ENCODE measurements at regions of chr5 and their contacts with region 1.

Region 1: DNA sequence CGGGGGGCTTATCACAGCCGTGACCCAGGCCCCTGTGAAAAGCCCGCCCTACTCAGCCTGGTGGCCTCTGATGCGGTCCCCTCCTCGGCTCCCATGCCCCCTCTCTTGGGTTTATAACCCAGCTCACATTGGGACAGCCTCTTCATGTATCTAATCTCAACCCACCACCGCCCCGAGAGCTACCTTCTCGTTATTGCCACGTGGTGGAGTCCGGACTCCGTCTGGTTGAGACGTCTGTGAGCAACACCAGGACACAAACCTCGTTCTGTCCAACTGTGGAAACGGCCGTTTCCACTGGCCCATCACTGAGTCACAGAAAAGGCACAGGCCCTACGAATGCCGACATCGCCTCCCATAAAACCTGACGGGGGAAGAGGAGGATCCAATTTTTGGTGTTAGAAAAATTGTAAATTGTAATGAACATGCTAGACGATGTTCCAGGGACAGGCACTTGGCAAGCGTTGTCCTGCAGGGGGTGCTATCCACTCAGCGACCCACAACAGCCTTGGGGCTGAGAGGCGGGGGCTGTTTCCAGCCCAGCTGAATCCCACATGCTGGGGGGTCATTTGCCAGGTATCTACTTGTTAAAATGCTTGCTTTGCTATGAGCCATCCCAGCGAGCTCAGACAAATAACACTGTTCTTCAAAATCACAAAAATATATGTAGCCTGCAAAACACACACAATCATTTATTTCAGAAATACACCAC is 37.3 kb upstream of the N4BP3 start:
- DNase-seq: peak; percentile 84
- ATAC-seq: peak; percentile 91
- H3K4me3 Mint-ChIP-seq: no peak overlapping the region
- H3K27ac Mint-ChIP-seq: no peak overlapping the region
- H3K4me1 Mint-ChIP-seq: peaks cover 6% of the 10 kb centered on the region
- H3K27me3 Mint-ChIP-seq: peaks cover 1% of the 10 kb centered on the region

Region 2: DNA sequence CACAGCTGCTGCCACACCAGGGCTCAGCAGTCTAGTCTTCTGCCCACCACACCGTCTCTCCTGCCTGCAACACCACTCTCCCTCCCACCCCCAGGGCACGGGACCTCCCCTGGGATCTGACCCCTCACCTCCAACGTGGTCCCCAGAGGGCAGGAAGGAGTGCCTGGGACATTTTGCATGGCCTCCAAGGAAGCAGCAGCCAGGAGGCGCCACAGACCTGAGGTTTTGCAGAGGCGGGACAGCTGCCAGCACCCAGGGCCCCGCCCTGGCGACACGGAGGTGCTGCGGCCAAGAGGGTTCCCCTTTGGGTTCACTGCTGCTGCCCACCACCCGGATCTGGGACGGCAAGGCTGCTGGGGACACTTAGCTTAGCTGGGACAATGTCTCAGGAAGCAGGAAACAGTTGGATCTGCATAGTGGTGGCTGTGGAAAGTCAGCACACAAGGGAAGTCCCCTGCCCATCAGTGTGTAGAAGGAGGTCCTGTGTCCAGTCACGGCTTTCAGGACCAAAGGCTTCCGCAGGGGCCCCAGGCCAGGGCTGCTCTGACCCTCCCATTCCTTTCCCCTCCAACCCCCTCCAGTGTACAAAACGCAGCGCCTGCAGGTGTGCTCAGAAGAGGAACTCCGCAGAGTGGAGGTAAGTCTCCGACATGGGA is 93.8 kb before region 1 on chr5:
- CTCF ChIA-PET with region 1: no interaction called
- POLR2A ChIA-PET with region 1: no interaction called
- DNase-seq: peak; percentile 53
- ATAC-seq: peak; percentile 57
- H3K4me3 Mint-ChIP-seq: no peak overlapping the region
- H3K27ac Mint-ChIP-seq: no peak overlapping the region
- H3K4me1 Mint-ChIP-seq: peaks cover 8% of the 10 kb centered on the region
- H3K27me3 Mint-ChIP-seq: peaks cover 50% of the 10 kb centered on the region

Region 3: DNA sequence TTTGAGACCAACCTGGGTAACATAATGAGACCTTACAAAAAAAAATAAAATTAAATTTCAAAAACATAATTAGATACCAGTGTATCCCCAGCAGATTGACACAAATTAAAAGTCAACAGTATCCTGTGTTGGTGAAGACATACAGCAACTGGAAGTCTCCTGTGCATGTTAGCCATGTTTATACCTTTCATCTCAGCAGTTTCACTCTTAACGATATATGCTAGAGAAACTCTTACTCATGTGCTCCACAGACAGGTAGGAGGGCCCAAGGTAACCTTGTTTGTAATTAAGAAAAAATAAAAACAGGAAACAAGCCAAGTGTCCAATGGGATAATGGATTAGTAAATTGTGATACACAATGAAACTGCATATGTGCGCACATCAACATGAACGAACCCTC is 12.7 kb before region 1 on chr5:
- CTCF ChIA-PET with region 1: interaction called, 13 read pairs
- POLR2A ChIA-PET with region 1: no interaction called
- DNase-seq: no peak
- ATAC-seq: no peak
- H3K4me3 Mint-ChIP-seq: no peak overlapping the region
- H3K27ac Mint-ChIP-seq: no peak overlapping the region
- H3K4me1 Mint-ChIP-seq: peaks cover 11% of the 10 kb centered on the region
- H3K27me3 Mint-ChIP-seq: peaks cover 2% of the 10 kb centered on the region

Region 4: DNA sequence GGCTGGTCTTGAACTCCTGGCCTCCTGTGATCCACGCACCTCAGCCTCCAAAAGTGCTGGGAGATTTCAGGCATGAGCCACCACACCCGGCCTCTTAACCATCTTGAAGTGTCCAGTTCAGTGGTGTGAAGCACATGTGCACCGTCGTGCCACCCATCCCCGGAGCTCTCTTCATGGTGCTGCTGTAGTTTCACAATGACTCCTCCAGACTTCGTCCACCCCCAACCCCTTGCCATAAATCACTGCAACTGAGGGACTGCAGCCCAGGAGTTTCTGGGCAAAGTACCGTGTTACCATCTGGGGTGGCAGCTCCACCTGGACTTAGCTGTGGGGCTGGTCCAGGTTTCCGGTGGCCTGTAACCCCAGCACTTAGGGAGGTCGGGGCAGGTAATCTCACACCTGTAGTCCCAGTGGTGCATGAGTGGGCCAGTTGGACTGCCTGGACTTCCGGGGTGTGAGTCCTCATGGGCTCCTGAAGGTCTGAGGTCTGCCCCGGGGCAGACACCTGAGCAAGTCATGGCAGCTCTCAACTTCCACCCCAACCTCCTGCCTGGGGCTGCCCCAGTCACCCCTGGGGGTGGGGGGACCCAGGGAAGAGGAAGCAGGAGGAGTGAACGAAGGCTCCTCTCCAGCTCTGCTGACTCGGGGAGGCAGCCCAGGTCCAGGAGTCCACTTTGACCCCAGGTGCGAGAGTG is 30.7 kb after region 1 on chr5:
- CTCF ChIA-PET with region 1: interaction called, 17 read pairs
- POLR2A ChIA-PET with region 1: no interaction called
- DNase-seq: no peak
- ATAC-seq: no peak
- H3K4me3 Mint-ChIP-seq: no peak overlapping the region
- H3K27ac Mint-ChIP-seq: no peak overlapping the region
- H3K4me1 Mint-ChIP-seq: peaks cover 10% of the 10 kb centered on the region
- H3K27me3 Mint-ChIP-seq: peaks cover 9% of the 10 kb centered on the region

Region 5: DNA sequence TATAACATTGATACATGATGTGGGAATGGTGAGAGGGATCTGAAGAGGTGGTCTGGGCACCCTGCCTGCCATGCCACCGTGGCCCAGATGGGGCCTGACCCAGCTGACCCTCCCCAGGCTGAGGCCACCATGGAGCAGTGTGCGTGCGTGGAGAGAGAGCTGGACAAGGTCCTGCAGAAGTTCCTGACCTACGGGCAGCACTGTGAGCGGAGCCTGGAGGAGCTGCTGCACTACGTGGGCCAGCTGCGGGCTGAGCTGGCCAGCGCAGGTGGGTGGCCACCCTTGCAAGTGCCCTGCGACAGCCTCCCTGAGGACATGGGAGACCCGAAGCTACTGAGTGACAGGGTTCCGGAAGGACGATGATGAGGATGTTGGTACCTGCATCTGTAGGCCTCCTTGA is 62.0 kb after region 1 on chr5:
- CTCF ChIA-PET with region 1: interaction called, 204 read pairs
- POLR2A ChIA-PET with region 1: no interaction called
- DNase-seq: no peak
- ATAC-seq: no peak
- H3K4me3 Mint-ChIP-seq: no peak overlapping the region
- H3K27ac Mint-ChIP-seq: no peak overlapping the region
- H3K4me1 Mint-ChIP-seq: no peaks in the 10 kb centered on the region
- H3K27me3 Mint-ChIP-seq: no peaks in the 10 kb centered on the region

Region 6: DNA sequence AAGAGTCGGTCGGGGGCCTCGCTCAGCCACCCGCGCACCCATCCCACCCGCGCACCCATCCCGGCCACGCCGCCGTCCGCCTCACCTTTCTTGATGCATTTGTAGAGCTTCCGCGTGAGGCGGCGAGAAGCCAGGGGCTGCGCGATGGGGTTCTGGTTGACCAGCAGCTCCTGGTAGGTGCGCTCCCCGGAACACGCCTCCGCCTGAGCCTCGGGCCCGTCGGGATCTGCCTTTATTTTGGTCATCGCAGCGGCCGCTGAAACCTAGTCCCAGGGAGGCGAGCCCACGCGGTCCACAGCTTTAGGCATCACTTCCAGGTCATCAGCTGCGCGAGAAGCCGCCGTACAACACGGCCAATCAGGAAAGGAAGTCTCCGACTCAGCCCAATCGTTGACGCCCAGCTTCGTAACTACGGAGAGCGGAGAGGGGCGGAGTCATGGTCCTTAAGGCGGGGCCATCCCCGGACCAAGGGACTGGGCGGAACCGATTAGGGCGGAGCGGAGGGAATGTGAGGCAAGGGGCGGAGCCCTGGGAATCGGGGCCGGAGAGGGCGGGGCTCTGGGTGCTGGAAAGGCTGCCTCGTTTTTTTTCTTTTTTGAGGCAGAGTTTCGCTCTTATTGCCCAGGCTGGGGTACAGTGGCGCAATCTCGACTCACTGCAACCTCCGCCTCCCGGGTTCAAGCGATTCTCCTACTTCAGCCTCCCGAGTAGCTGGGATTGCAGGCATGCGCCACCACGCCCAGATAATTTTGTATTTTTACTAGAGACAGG is 77.8 kb after region 1 on chr5 and contains the start of gene NHP2:
- CTCF ChIA-PET with region 1: interaction called, 204 read pairs
- POLR2A ChIA-PET with region 1: interaction called, 7 read pairs
- DNase-seq: peak; percentile 99
- ATAC-seq: peak; percentile 99
- H3K4me3 Mint-ChIP-seq: peak within 1 kb of the TSS; percentile 98
- H3K27ac Mint-ChIP-seq: peak within 1 kb of the TSS; percentile 93
- H3K4me1 Mint-ChIP-seq: peaks cover 43% of the 10 kb centered on the region
- H3K27me3 Mint-ChIP-seq: no peaks in the 10 kb centered on the region
- total RNA-seq, gene NHP2: 176 to 184 TPM

Region 7: GRCh38 chr5:178182158-178182876 is 106.3 kb after region 1 on chr5:
- CTCF ChIA-PET with region 1: interaction called, 15 read pairs
- POLR2A ChIA-PET with region 1: no interaction called
- DNase-seq: no peak
- ATAC-seq: peak; percentile 39
- H3K4me3 Mint-ChIP-seq: no peak overlapping the region
- H3K27ac Mint-ChIP-seq: peak overlapping the region; percentile 68
- H3K4me1 Mint-ChIP-seq: peaks cover 9% of the 10 kb centered on the region
- H3K27me3 Mint-ChIP-seq: no peaks in the 10 kb centered on the region

Measured in activated CD8-positive, alpha-beta T cell treated with anti-CD3 and anti-CD28 coated beads, Interleukin-2, amount 10 ng/mL, durations not matched to agents 7 days and 5 days (primary cell).